Ascending aorta (tissue), 2 donors: ENCODE measurements at regions of chr9 and their contacts with region 1.

Region 1: DNA sequence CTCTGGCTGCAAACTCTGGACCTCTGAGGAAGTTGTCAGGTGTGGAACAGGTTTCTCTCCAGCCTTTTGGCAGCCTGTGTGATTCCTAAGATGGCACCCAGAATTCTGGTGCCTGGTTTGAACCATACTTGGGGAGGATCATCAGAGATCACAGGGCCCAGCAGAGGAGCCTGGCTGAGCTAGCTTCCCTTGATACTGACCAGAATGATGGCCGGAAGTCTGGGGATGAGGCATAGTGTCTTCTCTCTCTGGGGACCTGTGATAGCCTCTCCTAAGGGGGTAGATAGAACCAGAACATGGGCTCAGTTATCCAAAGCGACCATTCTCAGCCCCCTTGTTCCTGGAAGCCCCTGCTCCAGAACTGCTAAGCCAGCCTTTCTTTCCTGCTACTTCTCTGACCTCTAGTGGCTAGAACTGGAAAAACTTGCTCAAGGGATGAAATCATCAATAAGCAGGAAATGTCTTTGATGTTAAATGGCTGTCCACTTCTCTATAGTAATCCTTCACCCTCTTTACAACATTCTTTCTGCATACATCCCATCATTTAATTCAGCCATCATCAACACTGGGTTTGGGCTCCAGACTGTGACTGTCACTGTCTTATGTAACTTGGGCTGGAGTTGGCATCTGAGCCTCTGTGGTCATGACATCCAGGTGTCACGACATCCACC is 55.1 kb downstream of the C9orf152 start:
- DNase-seq: no peak
- H3K4me3 ChIP-seq: no peak overlapping the region
- H3K27ac ChIP-seq: peak overlapping the region; percentile 3 to 23
- H3K4me1 ChIP-seq: peaks cover 14 to 54% of the 10 kb centered on the region in 2 donors
- H3K27me3 ChIP-seq: no peaks in the 10 kb centered on the region
- CTCF ChIP-seq: peak; percentile 46 to 79 (median 49)

Region 2: GRCh38 chr9:109579191-109579948 is 573.5 kb before region 1 on chr9:
- intact Hi-C with region 1: loop called (anchors 5 kb)
- DNase-seq: no peak
- H3K4me3 ChIP-seq: no peak overlapping the region
- H3K27ac ChIP-seq: no peak overlapping the region
- H3K4me1 ChIP-seq: no peaks in the 10 kb centered on the region
- H3K27me3 ChIP-seq: no peaks in the 10 kb centered on the region
- CTCF ChIP-seq: no peak

Region 3: DNA sequence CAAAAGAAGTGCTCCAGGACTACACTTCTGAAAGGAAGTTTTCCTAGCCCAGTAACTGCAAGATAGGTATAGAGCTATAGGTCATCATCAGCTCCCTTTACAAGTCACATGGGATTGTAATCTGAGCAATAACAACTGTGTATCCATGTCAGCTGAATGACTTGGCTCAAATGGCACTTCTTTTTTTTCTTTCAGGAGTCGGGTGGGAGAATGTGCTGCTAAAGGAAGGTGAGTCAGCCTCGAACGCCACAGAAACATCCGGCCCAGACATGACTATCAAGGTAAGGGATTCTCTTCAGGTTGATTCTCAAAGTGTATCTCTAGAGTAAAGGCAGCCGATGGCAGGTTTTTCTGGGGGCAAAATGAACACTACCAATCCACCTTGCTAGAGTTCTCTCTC is 137.1 kb before region 1 on chr9:
- intact Hi-C with region 1: no loop called
- DNase-seq: no peak
- H3K4me3 ChIP-seq: no peak overlapping the region
- H3K27ac ChIP-seq: peak overlapping the region in 1 of 2 donors; percentile 14
- H3K4me1 ChIP-seq: no peaks in the 10 kb centered on the region
- H3K27me3 ChIP-seq: no peaks in the 10 kb centered on the region
- CTCF ChIP-seq: no peak